Heart left ventricle (tissue), 16 donors: ENCODE measurements at regions of chr9 and their contacts with region 1.

Region 1: DNA sequence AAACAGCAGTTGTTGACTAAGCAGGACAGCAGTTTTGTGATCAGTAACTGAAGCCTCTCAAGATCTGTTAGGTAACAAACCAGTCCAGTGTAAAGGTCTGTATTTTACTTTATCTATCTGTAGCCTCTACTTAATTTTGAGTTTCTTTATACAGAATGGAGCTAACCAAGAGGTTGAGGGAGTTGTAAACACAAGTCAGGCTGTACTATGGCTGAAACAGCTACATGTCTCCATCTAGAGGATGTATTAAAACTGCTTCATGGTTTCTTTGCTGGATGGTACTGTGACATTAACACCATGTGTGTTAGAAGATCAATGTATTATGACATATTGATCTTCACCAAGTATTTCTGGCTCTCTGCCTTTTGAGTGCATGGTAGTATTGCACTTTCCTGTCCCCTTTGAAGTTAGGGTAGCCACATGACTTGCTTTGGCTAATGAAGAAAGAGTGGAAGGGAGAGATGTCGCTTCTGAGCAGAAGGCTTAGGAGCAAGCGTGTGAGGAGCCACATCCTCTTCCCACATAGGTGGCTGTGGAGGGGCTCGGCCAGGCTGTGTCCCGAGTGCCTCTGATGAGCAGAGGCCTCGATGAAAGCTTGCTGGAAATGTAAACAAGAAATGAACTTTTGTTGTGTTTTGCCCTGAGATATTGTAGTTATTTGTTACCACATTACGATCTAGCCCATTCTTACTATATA is 105.6 kb upstream of the PCA3 start:
- DNase-seq: no peak
- ATAC-seq: peak; percentile 57 to 92 (median 83)
- H3K4me3 ChIP-seq: no peak overlapping the region
- H3K27ac ChIP-seq: no peak overlapping the region
- H3K4me1 ChIP-seq: peaks cover 0 to 63% (median 8%) of the 10 kb centered on the region in 12 donors
- H3K27me3 ChIP-seq: no peaks in the 10 kb centered on the region
- CTCF ChIP-seq: peak; percentile 28 to 71 (median 54)
- POLR2A ChIP-seq: no peak

Region 2: DNA sequence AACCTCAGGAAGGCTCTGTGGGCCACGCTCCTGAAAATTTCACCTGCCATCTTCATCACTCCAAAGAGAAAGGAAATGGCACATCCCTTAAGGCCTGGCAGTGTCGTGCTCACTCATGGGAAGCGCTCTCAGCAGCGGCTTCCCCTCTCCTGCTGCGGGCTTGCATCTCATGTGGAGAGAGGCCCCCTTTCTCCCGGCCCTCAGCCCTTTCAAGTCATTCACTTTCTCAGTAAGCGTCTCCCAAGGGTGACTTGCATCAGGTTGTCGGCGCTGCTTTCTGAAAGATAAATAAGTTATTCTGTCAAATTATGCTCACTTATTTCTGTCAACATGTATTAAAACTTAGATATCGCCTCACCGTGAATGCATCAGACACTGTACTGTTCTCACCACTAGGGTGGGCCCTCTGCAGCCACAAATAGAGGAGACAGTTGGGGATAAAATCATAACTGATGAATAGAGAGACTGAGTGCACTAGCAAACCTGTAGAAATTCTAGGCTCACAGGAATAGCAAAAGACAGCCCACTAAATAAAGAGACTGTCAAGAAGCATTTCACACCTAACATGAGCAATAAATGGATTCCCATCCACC is 439.0 kb before region 1 on chr9:
- intact Hi-C with region 1: no loop called
- DNase-seq: no peak
- ATAC-seq: peak in 3 of 4 donors; percentile 54 to 70 (median 67)
- H3K4me3 ChIP-seq: peak overlapping the region in 1 of 12 donors; percentile 7
- H3K27ac ChIP-seq: no peak overlapping the region
- H3K4me1 ChIP-seq: peaks cover 0 to 7% (median 0%) of the 10 kb centered on the region in 12 donors
- H3K27me3 ChIP-seq: peaks cover 0 to 13% (median 0%) of the 10 kb centered on the region in 9 donors
- CTCF ChIP-seq: peak in 10 of 12 donors; percentile 16 to 54 (median 39)
- POLR2A ChIP-seq: no peak

Region 3: DNA sequence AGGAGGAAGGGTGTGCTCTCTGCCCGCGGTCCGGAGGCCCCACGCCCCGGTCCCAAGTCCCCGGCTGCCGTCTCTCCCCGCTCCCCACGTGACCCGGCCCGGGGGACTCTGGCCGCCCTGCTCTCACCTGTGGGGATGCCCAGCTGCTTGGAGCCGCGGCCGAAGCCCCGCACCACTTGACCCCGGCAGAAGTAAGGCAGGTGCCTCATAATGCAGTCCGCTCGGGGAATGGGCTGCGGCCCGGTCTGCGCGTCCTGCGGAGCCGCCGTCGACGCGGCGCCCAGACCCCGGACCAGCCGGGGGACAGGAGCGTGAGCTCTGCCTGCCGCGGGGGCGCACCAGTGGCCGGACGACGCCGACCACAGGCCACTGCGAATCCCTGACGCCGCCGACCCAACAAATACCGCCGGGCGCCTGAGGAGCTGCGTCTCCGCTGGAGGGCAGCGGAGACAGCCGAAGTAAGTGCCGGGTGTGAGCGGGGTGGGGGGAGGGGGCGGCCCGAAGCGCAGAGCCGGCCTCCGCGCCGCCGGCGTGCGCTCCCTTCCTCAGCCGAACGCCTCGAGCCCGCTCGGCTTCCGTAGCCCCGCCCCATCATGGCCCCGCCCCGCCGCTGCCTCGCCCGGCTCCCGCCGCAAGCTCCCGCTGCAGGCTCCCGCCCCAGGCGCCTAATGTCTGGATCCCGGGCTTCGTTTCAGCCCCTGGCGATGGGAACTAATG is 264.6 kb before region 1 on chr9 and contains the start of gene RFK:
- intact Hi-C with region 1: loop called in 1 of 10 experiments (anchors 5 kb)
- DNase-seq: peak; percentile 94 to 97 (median 94)
- ATAC-seq: peak; percentile 92 to 98 (median 98)
- H3K4me3 ChIP-seq: peak within 1 kb of the TSS; percentile 73 to 99 (median 93)
- H3K27ac ChIP-seq: peak within 1 kb of the TSS; percentile 86 to 99 (median 94)
- H3K4me1 ChIP-seq: peaks cover 0 to 43% (median 17%) of the 10 kb centered on the region in 12 donors
- H3K27me3 ChIP-seq: no peaks in the 10 kb centered on the region
- CTCF ChIP-seq: peak in 11 of 12 donors; percentile 20 to 69 (median 42)
- POLR2A ChIP-seq: peak in 1 of 2 donors; percentile 73
- total RNA-seq, gene RFK: 16.2 to 29.5 (median 23.6) TPM

Region 4: DNA sequence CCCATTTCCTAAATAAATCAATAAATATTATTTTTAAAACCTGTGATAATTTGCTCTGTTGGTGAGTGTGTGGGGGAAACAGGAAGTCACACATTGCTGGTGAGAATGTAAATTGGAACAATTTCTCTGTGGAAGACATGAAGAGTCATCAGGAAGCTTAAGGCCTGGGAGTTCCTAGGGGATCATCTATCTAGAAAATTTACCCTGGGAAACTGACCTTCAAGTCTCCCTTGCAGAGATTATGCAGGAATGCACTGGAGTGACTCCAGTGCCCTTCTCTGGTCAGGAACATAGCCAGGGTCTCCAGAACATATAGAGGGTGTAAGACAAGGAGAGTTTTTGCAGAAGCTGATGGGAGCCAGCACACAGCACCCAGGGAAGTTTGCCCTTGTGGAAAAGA is 212.7 kb before region 1 on chr9:
- intact Hi-C with region 1: loop called in 9 of 10 experiments (anchors 1 to 5 kb)
- DNase-seq: no peak
- ATAC-seq: no peak
- H3K4me3 ChIP-seq: no peak overlapping the region
- H3K27ac ChIP-seq: no peak overlapping the region
- H3K4me1 ChIP-seq: peaks cover 0 to 4% (median 0%) of the 10 kb centered on the region in 12 donors
- H3K27me3 ChIP-seq: no peaks in the 10 kb centered on the region
- CTCF ChIP-seq: no peak
- POLR2A ChIP-seq: no peak

Region 5: DNA sequence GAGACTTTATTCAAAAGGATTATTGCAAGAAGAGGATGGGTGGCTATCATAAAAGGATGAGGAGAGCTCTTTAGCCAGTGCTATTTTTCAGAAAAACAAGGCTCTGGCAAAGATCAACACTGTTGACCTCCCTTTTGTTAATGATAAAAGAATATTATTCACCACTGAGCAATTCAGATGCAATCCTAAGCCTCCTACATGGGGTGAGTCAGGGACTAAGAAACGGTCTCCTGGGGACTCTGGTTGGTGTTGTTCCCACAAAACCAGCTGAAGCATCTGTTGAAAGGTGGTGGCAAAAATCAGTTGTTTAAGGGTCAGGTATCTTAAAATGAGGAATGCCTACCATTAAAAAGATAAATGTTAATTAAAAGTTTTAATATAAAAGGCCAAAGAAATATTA is 207.4 kb before region 1 on chr9:
- intact Hi-C with region 1: loop called (anchors 1 to 5 kb)
- DNase-seq: peak in 1 of 5 donors; percentile 30
- ATAC-seq: peak in 2 of 4 donors; percentile 41 to 85
- H3K4me3 ChIP-seq: no peak overlapping the region
- H3K27ac ChIP-seq: no peak overlapping the region
- H3K4me1 ChIP-seq: peaks cover 0 to 4% (median 0%) of the 10 kb centered on the region in 12 donors
- H3K27me3 ChIP-seq: no peaks in the 10 kb centered on the region
- CTCF ChIP-seq: no peak
- POLR2A ChIP-seq: no peak

Region 6: DNA sequence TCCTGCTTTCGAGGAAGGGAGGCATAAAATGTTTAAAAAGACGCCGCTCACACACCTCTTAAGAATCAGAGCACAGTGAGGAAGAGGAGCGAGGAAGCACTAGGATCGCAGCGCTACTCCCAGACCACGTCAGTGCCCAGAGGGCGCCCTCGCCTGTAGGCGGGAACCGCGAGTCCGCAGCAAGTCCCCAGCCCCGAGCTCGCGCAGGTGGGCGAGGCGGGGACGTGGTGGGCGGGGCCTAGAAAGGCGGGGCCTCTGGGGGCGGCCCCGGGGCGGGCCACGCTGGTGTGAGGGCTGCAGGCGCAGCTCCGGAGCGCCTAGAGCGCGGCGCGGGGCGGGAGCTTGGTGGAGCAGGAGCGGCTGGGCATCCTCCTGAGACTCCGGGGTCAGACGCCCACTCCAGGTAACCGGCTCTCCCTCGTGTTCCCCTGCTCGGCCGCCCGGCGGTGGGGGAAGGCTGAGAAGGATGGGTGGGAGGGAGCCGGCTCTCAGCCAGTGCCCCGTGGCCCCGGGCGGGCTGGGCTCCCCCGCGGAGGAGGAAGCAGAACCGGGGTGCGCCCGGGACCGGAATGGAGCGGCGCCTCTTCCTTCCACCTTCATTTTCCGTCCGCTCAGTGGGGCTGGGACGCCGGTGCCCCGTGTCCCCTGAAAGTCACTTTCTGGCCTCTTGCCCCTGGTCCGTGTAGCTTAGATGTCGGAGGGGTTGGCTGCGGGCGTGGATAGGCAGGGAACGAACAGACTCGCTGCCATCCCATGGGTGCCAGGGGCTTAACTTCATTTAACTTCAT is 199.6 kb before region 1 on chr9 and contains the start of gene GCNT1:
- intact Hi-C with region 1: loop called in 1 of 10 experiments (anchors 5 kb)
- DNase-seq: peak; percentile 72 to 93 (median 84)
- ATAC-seq: peak; percentile 88 to 98 (median 94)
- H3K4me3 ChIP-seq: peak within 1 kb of the TSS; percentile 22 to 87 (median 70)
- H3K27ac ChIP-seq: peak within 1 kb of the TSS in 10 of 12 donors; percentile 5 to 84 (median 40)
- H3K4me1 ChIP-seq: peaks cover 0 to 39% (median 0%) of the 10 kb centered on the region in 12 donors
- H3K27me3 ChIP-seq: no peaks in the 10 kb centered on the region
- CTCF ChIP-seq: peak; percentile 24 to 61 (median 44)
- POLR2A ChIP-seq: peak in 1 of 2 donors; percentile 62
- total RNA-seq, gene GCNT1: 0.67 to 18.0 (median 3.4) TPM

Region 7: DNA sequence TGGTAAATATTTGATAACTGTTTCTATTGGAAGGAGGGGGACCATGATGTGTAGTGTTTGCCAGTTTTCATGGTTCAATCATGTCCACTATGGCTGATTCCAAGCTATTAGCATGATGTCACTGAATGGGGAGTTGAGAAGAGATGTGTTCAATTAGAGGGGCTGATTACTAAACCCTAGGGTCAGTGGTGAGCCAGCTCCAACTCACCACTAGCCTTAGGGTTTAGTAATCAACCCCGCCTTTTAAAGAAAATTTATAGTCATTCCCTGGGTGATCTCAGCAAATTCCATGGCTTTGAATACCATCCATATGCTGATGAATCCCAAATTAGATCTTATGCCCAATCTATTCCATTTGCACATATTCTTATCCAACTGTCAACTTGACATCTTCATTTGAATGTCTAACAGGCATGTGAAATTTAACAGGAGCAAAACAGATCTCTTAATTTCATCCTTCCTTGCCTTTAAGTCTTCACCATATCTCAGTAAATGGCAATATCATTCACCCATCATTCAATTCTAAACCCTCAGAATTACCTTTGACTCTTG is 100.9 kb before region 1 on chr9:
- intact Hi-C with region 1: loop called in 1 of 10 experiments (anchors 10 kb)
- DNase-seq: no peak
- ATAC-seq: no peak
- H3K4me3 ChIP-seq: no peak overlapping the region
- H3K27ac ChIP-seq: no peak overlapping the region
- H3K4me1 ChIP-seq: peaks cover 0 to 62% (median 0%) of the 10 kb centered on the region in 12 donors
- H3K27me3 ChIP-seq: no peaks in the 10 kb centered on the region
- CTCF ChIP-seq: no peak
- POLR2A ChIP-seq: no peak

Region 8: GRCh38 chr9:76704593-76705204 is 46.0 kb after region 1 on chr9:
- intact Hi-C with region 1: loop called in 4 of 10 experiments (anchors 5 kb)
- DNase-seq: peak in 1 of 5 donors; percentile 28
- ATAC-seq: peak in 3 of 4 donors; percentile 54 to 59 (median 54)
- H3K4me3 ChIP-seq: no peak overlapping the region
- H3K27ac ChIP-seq: no peak overlapping the region
- H3K4me1 ChIP-seq: peaks cover 0 to 28% (median 0%) of the 10 kb centered on the region in 12 donors
- H3K27me3 ChIP-seq: peaks cover 0 to 38% (median 5%) of the 10 kb centered on the region in 9 donors
- CTCF ChIP-seq: peak; percentile 52 to 75 (median 67)
- POLR2A ChIP-seq: no peak